Sciatic nerve (tissue), 2 donors: ENCODE measurements at regions of chrX and their contacts with region 1.

Region 1: DNA sequence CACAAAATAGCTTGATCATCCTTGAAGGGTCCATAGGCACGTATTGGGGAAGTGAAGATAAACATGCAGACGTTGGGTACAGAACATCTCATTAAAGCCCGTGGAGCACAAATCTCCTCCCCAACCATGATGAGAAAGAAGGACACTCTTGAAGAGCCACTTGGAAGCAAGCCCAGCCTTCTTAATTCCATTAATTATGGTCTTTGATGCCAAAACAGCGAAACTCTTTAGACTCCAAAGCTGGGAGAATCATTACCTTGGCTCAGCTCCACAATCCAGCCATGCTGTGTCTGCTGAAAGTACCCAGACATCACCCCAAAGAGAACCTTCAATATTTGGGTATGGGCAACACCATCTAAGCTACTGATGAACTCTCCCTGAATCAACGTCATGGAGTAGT is 169.0 kb upstream of the MBNL3 start:
- DNase-seq: no peak
- ATAC-seq: no peak

Region 2: DNA sequence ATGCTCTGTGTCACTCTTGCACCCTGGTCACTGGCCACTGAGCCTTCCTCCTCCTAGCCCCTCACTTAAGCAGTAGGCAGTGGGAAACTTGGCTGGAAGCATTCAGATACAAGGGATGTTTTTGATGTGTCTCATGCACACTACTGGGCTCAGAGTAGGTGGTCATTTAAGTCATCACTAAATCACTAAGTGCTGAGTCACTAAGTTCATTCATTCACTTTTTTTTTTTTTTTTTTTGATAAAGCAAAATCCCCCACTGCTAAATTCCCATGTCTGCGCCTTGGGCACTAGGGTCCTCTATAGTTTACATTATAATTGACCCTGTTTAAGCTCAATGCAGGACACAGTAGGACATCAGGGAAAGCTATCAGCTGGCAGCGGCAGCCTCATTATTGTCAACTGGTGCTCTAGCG is 13.4 kb after region 1 on chrX:
- intact Hi-C with region 1: loop called (anchors 1 kb)
- DNase-seq: no peak
- ATAC-seq: no peak

Region 3: GRCh38 chrX:132689612-132690563 is 32.0 kb after region 1 on chrX:
- intact Hi-C with region 1: no loop called
- DNase-seq: no peak
- ATAC-seq: no peak